ENCODE measurements at regions of chr14 and their contacts with region 1.

Region 1: DNA sequence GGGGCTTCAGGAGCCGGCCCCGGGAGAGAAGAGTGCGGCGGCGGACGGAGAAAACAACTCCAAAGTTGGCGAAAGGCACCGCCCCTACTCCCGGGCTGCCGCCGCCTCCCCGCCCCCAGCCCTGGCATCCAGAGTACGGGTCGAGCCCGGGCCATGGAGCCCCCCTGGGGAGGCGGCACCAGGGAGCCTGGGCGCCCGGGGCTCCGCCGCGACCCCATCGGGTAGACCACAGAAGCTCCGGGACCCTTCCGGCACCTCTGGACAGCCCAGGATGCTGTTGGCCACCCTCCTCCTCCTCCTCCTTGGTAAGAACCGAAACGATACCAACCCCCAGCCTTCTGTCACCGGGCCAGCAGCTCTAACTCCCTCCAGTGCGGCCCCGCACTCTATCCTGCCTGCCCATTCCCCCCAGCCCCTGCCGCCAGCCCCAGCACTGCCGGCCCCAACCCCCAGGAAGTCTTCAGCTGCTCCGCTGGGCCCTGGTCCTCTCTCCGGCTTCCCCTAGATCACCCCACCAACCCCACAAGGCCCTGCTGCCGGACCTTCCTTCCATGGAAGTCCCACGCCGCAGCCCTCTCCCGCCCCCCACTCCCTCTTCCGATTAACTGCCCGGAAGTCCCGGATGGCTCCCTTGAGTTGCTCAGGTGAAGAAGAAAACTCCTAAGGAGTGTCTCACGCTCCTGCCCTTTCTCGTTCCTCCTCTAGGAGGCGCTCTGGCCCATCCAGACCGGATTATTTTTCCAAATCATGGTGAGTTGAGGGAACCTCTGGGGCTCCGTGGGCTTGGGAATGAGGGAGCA is 693 bp downstream of the LRP10 start:
- DNase-seq: peak; percentile 83
- ATAC-seq: peak; percentile 22
- H3K4me3 ChIP-seq: peak overlapping the region; percentile 79 to 97 (median 92)
- H3K4me3 Mint-ChIP-seq: peak overlapping the region; percentile 96
- H3K27ac ChIP-seq: peak overlapping the region; percentile 84 to 88
- H3K27ac Mint-ChIP-seq: peak overlapping the region; percentile 98
- H3K4me1 ChIP-seq: peaks cover 19 to 35% of the 10 kb centered on the region in 2 donors
- H3K4me1 Mint-ChIP-seq: peaks cover 34% of the 10 kb centered on the region
- H3K27me3 ChIP-seq: no peaks in the 10 kb centered on the region
- H3K27me3 Mint-ChIP-seq: no peaks in the 10 kb centered on the region
- CTCF ChIP-seq: peak; percentile 90

Region 2: DNA sequence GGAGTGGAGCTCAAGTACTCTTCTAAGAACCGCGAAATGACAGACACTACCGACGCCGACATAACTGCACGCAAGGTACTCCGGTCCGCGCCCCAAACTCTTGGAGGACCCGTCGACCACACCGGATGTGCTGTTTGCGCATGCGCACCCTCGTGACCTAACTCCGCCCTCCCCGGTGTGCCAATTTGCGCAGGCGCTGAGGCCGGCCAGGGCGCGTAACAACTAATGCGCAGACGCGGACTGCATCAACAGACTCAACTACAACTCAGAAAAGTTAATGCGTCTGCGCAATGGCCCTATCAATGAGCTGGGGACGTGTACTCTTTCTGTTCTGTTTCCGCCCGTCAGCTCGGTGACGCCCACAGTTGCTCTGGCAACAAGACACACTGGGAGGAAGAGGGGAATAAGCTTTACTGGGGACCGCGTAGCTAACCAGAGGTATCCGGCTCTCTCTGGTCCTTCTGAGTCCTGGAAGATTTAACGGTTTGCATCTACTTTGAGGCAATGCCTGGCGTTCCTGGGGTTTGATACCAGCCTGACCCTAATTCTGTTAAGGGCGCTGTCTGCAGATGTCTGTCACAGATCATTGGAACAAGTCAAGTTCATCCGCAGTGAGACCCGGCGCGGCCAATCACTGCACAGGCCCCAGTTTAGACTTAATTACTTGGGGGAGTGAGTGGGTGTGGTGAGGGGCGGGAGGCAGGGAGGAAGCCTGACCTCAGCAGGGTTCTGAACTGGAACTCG is 283.0 kb before region 1 on chr14 and contains the start of gene DAD1:
- CTCF ChIA-PET with region 1: interaction called, 10 read pairs
- POLR2A ChIA-PET with region 1: no interaction called
- intact Hi-C with region 1: loop called (anchors 1 kb)
- DNase-seq: peak; percentile 100
- ATAC-seq: peak; percentile 89
- H3K4me3 ChIP-seq: peak within 1 kb of the TSS; percentile 75 to 84 (median 78)
- H3K4me3 Mint-ChIP-seq: peak within 1 kb of the TSS; percentile 99
- H3K27ac ChIP-seq: peak within 1 kb of the TSS; percentile 97
- H3K27ac Mint-ChIP-seq: peak within 1 kb of the TSS; percentile 96
- H3K4me1 ChIP-seq: peaks cover 30% of the 10 kb centered on the region in 2 donors
- H3K4me1 Mint-ChIP-seq: peaks cover 53% of the 10 kb centered on the region
- H3K27me3 ChIP-seq: no peaks in the 10 kb centered on the region
- H3K27me3 Mint-ChIP-seq: peaks cover 2% of the 10 kb centered on the region
- CTCF ChIP-seq: no peak
- total RNA-seq, gene DAD1: 76.1 and 77.4 TPM in 2 replicates

Region 3: GRCh38 chr14:22739423-22739822 is 132.8 kb before region 1 on chr14:
- CTCF ChIA-PET with region 1: no interaction called
- POLR2A ChIA-PET with region 1: no interaction called
- intact Hi-C with region 1: no loop called
- DNase-seq: no peak
- ATAC-seq: no peak
- H3K4me3 ChIP-seq: no peak overlapping the region
- H3K4me3 Mint-ChIP-seq: no peak overlapping the region
- H3K27ac ChIP-seq: no peak overlapping the region
- H3K27ac Mint-ChIP-seq: no peak overlapping the region
- H3K4me1 ChIP-seq: no peaks in the 10 kb centered on the region
- H3K4me1 Mint-ChIP-seq: peaks cover 5% of the 10 kb centered on the region
- H3K27me3 ChIP-seq: no peaks in the 10 kb centered on the region
- H3K27me3 Mint-ChIP-seq: peaks cover 3% of the 10 kb centered on the region
- CTCF ChIP-seq: no peak

Region 4: DNA sequence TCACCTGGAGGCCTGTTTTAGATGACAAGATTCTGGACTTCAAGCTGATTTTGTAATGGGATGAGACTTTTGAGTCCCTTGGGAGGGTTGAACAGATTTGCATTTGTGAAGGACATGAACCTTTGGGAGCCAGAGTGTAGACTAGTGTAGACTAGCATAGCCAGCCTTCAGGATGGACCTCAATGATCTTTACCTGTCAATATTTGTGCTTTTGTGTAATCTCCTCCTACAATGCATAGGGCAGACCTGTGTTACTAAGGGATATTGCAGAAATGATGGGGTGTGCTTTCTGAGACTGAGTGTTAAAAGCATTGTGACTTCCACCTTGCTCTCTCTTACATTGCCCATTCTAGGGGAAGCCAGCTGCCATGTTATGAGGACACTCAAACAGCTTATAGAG is 10.6 kb before region 1 on chr14:
- CTCF ChIA-PET with region 1: interaction called, 17 read pairs
- POLR2A ChIA-PET with region 1: interaction called, 3 read pairs
- intact Hi-C with region 1: no loop called
- DNase-seq: no peak
- ATAC-seq: no peak
- H3K4me3 ChIP-seq: no peak overlapping the region
- H3K4me3 Mint-ChIP-seq: no peak overlapping the region
- H3K27ac ChIP-seq: no peak overlapping the region
- H3K27ac Mint-ChIP-seq: no peak overlapping the region
- H3K4me1 ChIP-seq: no peaks in the 10 kb centered on the region
- H3K4me1 Mint-ChIP-seq: peaks cover 3% of the 10 kb centered on the region
- H3K27me3 ChIP-seq: peaks cover 0 to 3% (median 0%) of the 10 kb centered on the region in 4 experiments
- H3K27me3 Mint-ChIP-seq: no peaks in the 10 kb centered on the region
- CTCF ChIP-seq: no peak

Region 5: GRCh38 chr14:22900081-22900799 is 28.0 kb after region 1 on chr14:
- CTCF ChIA-PET with region 1: interaction called, 111 read pairs
- POLR2A ChIA-PET with region 1: interaction called, 7 read pairs
- intact Hi-C with region 1: loop called (anchors 1 kb)
- DNase-seq: peak; percentile 81
- ATAC-seq: peak; percentile 76
- H3K4me3 ChIP-seq: no peak overlapping the region
- H3K4me3 Mint-ChIP-seq: no peak overlapping the region
- H3K27ac ChIP-seq: peak overlapping the region in 1 of 2 donors; percentile 38
- H3K27ac Mint-ChIP-seq: peak overlapping the region; percentile 10
- H3K4me1 ChIP-seq: peaks cover 3 to 6% of the 10 kb centered on the region in 2 donors
- H3K4me1 Mint-ChIP-seq: peaks cover 7% of the 10 kb centered on the region
- H3K27me3 ChIP-seq: no peaks in the 10 kb centered on the region
- H3K27me3 Mint-ChIP-seq: no peaks in the 10 kb centered on the region
- CTCF ChIP-seq: peak; percentile 71

Region 6: DNA sequence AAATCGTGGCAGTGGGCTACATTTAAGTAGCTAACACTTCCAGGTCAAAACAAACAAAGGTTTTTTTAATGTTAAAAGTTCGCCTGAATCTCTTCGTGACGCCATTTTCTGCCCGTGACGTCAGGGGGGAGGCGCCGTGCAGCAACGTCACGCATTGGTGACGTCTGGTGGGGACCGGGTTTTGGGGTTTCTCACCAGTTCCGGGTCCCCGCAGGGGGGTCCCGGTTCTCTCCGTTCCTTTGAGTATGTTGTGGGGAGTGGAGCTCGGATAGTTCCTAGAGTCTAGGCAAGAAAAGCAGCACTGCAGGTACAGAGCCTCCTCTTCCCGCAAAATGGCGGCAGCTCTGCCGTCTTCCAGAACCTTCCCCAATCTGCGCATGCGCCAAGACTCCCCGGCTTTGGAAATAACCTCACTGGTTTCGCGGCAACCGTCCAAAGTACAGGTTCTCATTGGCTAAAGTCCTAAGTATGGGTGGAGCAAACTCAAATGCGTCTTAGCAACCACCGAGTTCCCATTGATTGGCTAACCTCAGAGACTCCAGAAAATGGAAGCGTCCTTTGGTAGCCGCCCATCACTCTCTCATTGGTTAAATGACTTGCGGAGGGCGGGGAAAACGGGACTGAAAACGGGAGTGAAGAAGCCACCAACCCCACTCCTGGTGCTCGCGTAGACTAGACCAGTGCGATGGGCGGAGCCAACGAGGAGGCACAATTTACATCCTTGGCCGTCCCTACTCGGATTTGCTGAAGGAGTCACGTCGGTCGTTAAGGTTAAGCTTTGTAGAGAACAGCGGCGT is 46.8 kb after region 1 on chr14 and contains the start of gene RBM23:
- CTCF ChIA-PET with region 1: interaction called, 40 read pairs
- POLR2A ChIA-PET with region 1: interaction called, 5 read pairs
- intact Hi-C with region 1: loop called (anchors 1 kb)
- DNase-seq: peak; percentile 100
- ATAC-seq: peak; percentile 87
- H3K4me3 ChIP-seq: peak within 1 kb of the TSS; percentile 72 to 98 (median 96)
- H3K4me3 Mint-ChIP-seq: peak within 1 kb of the TSS; percentile 93
- H3K27ac ChIP-seq: peak within 1 kb of the TSS; percentile 98 to 99
- H3K27ac Mint-ChIP-seq: peak within 1 kb of the TSS; percentile 99
- H3K4me1 ChIP-seq: peaks cover 16 to 28% of the 10 kb centered on the region in 2 donors
- H3K4me1 Mint-ChIP-seq: peaks cover 38% of the 10 kb centered on the region
- H3K27me3 ChIP-seq: no peaks in the 10 kb centered on the region
- H3K27me3 Mint-ChIP-seq: no peaks in the 10 kb centered on the region
- CTCF ChIP-seq: no peak
- total RNA-seq, gene RBM23: 165 and 188 TPM in 2 replicates

Region 7: DNA sequence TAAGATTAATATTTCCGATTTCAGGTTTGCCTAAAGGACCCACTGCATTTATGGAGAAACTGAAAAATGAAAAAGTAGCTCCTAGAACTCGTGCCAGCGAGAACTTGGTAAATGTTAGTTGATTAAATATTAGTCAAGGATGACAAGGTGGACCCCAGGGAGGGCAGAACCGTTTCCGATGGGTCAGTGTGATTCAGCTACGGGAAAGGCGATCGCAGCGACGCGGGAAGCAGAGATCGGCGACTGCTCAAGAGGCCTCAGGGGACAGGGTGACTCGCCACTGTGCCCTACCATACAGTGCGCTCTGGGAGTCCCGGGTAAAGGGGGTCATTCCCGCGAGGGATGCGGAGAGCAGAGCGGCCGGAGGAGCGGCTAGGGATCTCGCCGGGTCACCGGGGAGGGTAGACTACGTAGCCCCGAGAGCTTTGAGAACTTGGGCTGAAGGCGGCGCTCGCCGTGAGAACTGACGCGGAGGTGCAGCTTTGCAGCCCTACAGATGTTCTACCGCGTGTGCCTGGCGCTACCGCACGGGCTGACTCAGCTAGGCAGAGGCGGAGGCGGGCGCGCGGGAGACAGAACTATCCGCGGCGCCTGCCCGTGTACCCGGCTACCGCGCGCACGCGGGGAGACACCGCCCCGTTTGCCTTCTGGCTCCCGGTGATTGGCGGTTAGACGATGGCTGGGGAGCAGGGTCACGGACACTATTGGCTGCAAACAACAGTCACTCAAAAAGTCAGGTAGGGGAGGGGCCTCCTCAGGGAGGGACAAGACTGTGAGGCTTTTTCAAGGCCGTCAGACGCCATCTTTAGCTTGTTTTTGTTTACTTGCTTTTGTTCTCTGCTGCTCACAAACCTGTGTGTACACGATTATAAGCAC is 134.5 kb after region 1 on chr14:
- CTCF ChIA-PET with region 1: no interaction called
- POLR2A ChIA-PET with region 1: no interaction called
- intact Hi-C with region 1: loop called (anchors 1 kb)
- DNase-seq: peak; percentile 98
- ATAC-seq: peak; percentile 91
- H3K4me3 ChIP-seq: peak overlapping the region; percentile 70 to 95 (median 85)
- H3K4me3 Mint-ChIP-seq: peak overlapping the region; percentile 99
- H3K27ac ChIP-seq: peak overlapping the region; percentile 75 to 88
- H3K27ac Mint-ChIP-seq: peak overlapping the region; percentile 98
- H3K4me1 ChIP-seq: peaks cover 24 to 32% of the 10 kb centered on the region in 2 donors
- H3K4me1 Mint-ChIP-seq: peaks cover 42% of the 10 kb centered on the region
- H3K27me3 ChIP-seq: no peaks in the 10 kb centered on the region
- H3K27me3 Mint-ChIP-seq: no peaks in the 10 kb centered on the region
- CTCF ChIP-seq: no peak

Region 8: DNA sequence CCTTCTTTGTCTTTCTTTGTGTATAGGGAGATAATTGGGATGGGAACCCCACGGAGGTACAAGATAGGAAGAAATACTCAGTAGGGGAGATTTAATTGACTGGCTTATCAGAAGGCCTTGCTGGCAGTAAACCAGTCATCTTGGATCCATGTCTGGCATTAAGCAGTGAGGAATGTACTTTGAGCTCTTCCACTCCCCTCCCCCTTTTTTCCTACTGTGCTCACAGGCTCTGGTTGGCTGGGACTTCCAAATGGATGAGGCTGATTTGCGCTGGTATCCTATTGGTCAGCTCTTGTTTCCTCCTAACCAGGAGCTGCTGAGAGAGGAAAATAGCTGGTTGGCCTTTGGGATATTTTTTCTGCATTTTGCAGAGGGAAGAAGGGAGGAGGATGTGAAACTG is 622.0 kb after region 1 on chr14:
- CTCF ChIA-PET with region 1: no interaction called
- POLR2A ChIA-PET with region 1: no interaction called
- intact Hi-C with region 1: no loop called
- DNase-seq: no peak
- ATAC-seq: no peak
- H3K4me3 ChIP-seq: no peak overlapping the region
- H3K4me3 Mint-ChIP-seq: no peak overlapping the region
- H3K27ac ChIP-seq: no peak overlapping the region
- H3K27ac Mint-ChIP-seq: no peak overlapping the region
- H3K4me1 ChIP-seq: no peaks in the 10 kb centered on the region
- H3K4me1 Mint-ChIP-seq: no peaks in the 10 kb centered on the region
- H3K27me3 ChIP-seq: no peaks in the 10 kb centered on the region
- H3K27me3 Mint-ChIP-seq: no peaks in the 10 kb centered on the region
- CTCF ChIP-seq: no peak